Activated B cell treated with CpG ODN at 0.5 μM for 24 hours (primary cell): ENCODE measurements at regions of chr11 and their contacts with region 1.

Region 1: DNA sequence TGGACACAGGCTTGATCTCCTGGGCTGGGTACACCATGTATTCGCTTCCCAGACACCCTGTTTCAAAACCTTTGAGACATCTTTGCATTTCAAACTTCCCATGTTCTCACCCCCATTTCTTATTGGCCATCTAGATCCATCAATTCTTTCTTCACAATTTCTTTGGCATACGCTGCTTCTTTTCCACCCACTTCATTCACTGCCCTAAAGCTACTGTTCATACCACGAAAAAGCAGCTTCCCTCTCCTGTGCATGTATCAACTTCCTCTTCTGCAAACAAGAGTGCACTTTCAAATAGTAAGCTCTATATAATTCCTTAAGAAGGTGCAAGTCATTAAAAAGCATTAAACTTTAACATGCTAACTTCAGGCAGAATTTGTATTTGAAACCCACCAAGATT is 21.4 kb downstream of the UVRAG start:
- DNase-seq: no peak
- ATAC-seq: peak; percentile 71
- H3K4me3 Mint-ChIP-seq: peak overlapping the region; percentile 5
- H3K27ac Mint-ChIP-seq: peak overlapping the region; percentile 38
- H3K4me1 Mint-ChIP-seq: peaks cover 95% of the 10 kb centered on the region
- H3K27me3 Mint-ChIP-seq: no peaks in the 10 kb centered on the region
- CTCF ChIP-seq: no peak

Region 2: GRCh38 chr11:75319035-75319877 is 517.2 kb before region 1 on chr11:
- CTCF ChIA-PET with region 1: no interaction called
- POLR2A ChIA-PET with region 1: no interaction called
- intact Hi-C with region 1: no loop called
- DNase-seq: no peak
- ATAC-seq: no peak
- H3K4me3 Mint-ChIP-seq: no peak overlapping the region
- H3K27ac Mint-ChIP-seq: no peak overlapping the region
- H3K4me1 Mint-ChIP-seq: no peaks in the 10 kb centered on the region
- H3K27me3 Mint-ChIP-seq: peaks cover 3% of the 10 kb centered on the region
- CTCF ChIP-seq: no peak

Region 3: DNA sequence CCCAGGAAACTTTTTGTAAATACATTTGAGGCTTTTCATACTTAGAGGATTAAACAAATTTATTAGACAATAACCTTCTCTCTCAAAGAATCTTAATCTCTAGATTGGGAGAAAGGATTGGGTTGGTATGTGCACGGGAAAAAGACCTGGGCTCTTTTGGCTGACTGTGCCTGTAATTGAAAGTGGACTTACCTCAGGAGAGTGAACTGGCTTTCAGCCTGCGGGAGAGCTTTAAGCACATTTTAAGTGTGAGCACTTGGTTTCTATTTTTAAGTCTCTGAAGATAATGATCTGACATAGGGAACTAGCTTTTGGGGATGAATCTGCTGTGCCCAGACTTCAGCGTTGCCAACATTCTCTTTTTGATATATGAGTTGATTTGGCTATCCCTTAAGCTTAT is 14.4 kb after region 1 on chr11:
- CTCF ChIA-PET with region 1: no interaction called
- POLR2A ChIA-PET with region 1: interaction called, 6 read pairs
- intact Hi-C with region 1: loop called (anchors 2 kb)
- DNase-seq: no peak
- ATAC-seq: no peak
- H3K4me3 Mint-ChIP-seq: peak overlapping the region; percentile 8
- H3K27ac Mint-ChIP-seq: peak overlapping the region; percentile 55
- H3K4me1 Mint-ChIP-seq: peaks cover 59% of the 10 kb centered on the region
- H3K27me3 Mint-ChIP-seq: no peaks in the 10 kb centered on the region
- CTCF ChIP-seq: no peak

Region 4: DNA sequence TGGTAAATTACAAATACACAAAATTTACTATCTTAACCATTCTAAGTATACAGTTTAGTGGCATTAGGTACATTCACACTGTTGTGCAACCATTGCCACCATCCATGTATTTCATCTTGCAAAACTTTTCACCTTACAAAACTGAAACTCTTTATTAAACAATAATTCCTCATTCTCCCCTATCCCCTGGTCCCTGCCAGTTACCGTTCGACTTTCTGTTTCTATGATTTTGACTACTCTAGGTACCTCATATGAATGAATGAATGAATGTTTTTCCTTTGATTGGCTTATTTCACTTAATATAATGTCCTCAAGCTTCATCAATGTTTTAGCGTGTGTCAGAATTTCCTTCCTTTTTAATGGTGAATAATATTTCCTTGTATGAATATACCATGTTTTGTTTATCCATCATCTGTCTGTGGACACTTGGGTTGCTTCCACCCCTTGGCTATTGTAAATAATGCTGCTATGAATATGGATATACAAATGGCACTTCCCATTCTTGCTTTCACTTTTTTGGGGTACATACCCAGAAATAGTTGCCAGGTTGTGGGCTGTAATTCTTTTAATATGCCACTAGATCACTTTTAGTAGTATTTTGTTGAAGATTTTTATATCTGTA is 71.6 kb after region 1 on chr11:
- CTCF ChIA-PET with region 1: no interaction called
- POLR2A ChIA-PET with region 1: no interaction called
- intact Hi-C with region 1: no loop called
- DNase-seq: no peak
- ATAC-seq: no peak
- H3K4me3 Mint-ChIP-seq: peak overlapping the region; percentile 24
- H3K27ac Mint-ChIP-seq: peak overlapping the region; percentile 4
- H3K4me1 Mint-ChIP-seq: peaks cover 52% of the 10 kb centered on the region
- H3K27me3 Mint-ChIP-seq: no peaks in the 10 kb centered on the region
- CTCF ChIP-seq: no peak

Region 5: GRCh38 chr11:76008474-76008873 is 172.1 kb after region 1 on chr11:
- CTCF ChIA-PET with region 1: no interaction called
- POLR2A ChIA-PET with region 1: no interaction called
- intact Hi-C with region 1: no loop called
- DNase-seq: no peak
- ATAC-seq: no peak
- H3K4me3 Mint-ChIP-seq: no peak overlapping the region
- H3K27ac Mint-ChIP-seq: no peak overlapping the region
- H3K4me1 Mint-ChIP-seq: no peaks in the 10 kb centered on the region
- H3K27me3 Mint-ChIP-seq: no peaks in the 10 kb centered on the region
- CTCF ChIP-seq: no peak